GM10248 (cell line): ENCODE measurements at regions of chr10 and their contacts with region 1.

Region 1: GRCh38 chr10:92993699-92994272 is 66.8 kb upstream of the CYP26C1 start:
- DNase-seq: no peak
- CTCF ChIP-seq: no peak

Region 2: GRCh38 chr10:92880233-92880861 is 113.4 kb before region 1 on chr10:
- CTCF ChIA-PET with region 1: no interaction called
- POLR2A ChIA-PET with region 1: no interaction called
- DNase-seq: no peak
- CTCF ChIP-seq: peak; percentile 37

Region 3: DNA sequence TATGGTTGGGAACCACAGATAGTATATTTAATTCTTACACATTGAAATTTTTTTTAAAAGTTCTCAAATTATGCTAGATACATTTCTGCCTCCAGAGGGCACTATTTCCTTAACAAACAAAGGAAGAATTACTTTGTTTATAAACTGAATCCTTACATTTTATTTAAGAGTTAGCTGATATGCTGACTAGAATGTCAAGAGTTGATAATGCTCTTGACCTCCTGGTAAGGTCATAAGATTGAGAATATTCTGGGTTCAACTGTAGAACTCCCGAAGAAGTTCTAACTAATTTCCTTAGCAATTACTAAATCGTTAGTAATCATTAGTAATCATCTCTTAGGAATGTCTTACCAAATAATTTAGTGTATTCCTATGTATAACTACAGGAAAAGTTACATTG is 28.5 kb before region 1 on chr10:
- CTCF ChIA-PET with region 1: interaction called, 13 read pairs
- POLR2A ChIA-PET with region 1: no interaction called
- DNase-seq: peak; percentile 14
- CTCF ChIP-seq: peak; percentile 47

Region 4: GRCh38 chr10:93006435-93007039 is 12.8 kb after region 1 on chr10:
- CTCF ChIA-PET with region 1: interaction called, 13 read pairs
- POLR2A ChIA-PET with region 1: no interaction called
- DNase-seq: peak; percentile 14
- CTCF ChIP-seq: peak; percentile 52